ENCODE measurements at regions of chr7 and their contacts with region 1.

Region 1: DNA sequence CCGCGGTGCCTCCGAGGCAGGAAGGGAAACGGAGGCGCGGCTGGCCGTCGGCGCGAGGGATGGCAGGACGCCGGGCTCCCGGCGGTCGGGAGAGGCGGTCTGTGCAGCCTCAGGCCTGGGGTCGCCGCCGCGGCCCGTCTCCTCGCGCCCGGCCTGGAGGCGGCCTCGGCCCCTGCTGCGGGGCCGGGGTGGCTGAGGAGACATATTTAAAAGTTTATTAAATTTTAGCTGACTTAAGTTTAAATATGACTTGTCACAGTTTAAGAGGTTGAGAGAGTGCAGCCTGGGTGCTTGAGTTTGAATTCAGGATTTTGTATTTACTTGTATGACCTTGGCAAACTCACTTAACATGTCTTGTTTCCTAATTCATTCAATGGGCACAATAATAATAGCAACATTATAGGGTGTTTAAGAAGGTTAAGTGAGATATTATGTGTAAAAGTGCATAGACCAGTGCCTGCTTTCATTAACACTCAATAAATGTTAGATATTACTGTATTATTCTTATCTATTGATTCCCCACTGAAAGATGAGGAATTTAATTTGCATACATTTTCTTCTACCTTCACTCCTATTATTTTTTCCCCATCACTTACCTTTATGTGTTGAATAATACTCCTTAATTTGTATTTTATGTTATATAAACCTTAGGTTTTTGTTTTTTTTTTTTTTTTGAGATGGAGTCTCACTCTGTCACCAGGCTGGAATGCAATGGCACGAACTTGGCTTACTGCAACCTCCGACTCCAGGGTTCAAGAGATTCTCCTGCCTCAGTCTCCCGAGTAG is 718 bp downstream of the DYNC2I1 start:
- DNase-seq: peak in 2 of 10 donors; percentile 20 to 22
- ATAC-seq: no peak
- H3K4me3 Mint-ChIP-seq: peak overlapping the region; percentile 64 to 99 (median 96)
- H3K27ac Mint-ChIP-seq: peak overlapping the region; percentile 43 to 90 (median 68)
- H3K4me1 Mint-ChIP-seq: peaks cover 12 to 42% (median 28%) of the 10 kb centered on the region in 4 donors
- H3K27me3 Mint-ChIP-seq: no peaks in the 10 kb centered on the region

Region 2: GRCh38 chr7:158704704-158705468 is 152.2 kb before region 1 on chr7 and contains the start of gene NCAPG2:
- POLR2A ChIA-PET with region 1: interaction called, 11 read pairs
- DNase-seq: peak; percentile 90 to 99 (median 97)
- ATAC-seq: peak; percentile 96 to 97
- H3K4me3 Mint-ChIP-seq: peak within 1 kb of the TSS; percentile 78 to 98 (median 88)
- H3K27ac Mint-ChIP-seq: peak within 1 kb of the TSS; percentile 43 to 96 (median 82)
- H3K4me1 Mint-ChIP-seq: peaks cover 12 to 21% (median 17%) of the 10 kb centered on the region in 4 donors
- H3K27me3 Mint-ChIP-seq: no peaks in the 10 kb centered on the region
- polyA plus RNA-seq, gene NCAPG2: 2.4 to 3.7 (median 2.6) TPM

Region 3: DNA sequence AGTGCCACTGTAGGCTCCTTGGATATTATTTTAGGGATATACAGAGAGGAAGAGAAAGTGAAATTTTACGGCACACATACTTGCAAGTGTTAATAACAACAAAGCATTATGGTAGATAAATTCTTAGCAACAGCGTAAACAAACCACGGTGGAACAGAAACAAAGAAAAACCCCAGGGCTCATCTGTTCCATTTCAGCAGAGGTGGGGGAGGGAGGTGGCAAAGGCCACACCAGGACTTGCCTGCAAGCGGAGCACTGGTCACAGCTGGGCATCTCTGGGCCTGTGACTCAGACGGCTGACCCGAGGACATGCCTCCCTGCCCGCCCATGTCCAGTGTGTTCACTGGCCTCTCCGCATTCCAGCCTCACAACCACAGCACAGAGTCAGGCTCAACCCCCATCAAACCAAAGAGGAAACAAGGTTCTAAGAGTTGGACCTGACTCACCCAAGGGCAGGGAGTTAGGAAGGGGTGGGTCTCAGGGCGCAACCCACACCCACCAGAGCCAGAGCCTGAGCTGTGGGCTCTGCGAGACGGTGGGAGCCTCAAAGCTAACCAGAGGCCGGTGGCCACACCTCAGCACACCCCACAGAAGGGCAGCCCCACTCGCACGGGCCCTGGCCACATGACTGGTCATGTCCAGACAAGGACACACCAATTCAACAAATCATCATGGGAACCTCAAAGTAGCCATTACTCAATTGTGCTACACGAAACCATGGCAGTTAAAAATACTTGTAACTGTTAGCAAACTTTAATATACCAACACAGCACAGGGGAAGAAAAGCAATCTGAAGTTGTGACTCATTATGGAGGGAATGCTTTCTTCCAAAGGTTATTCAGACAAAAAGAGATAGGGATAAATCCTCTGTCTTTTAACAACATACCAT is 38.5 kb before region 1 on chr7:
- POLR2A ChIA-PET with region 1: interaction called, 10 read pairs
- DNase-seq: peak; percentile 54 to 88 (median 80)
- ATAC-seq: peak; percentile 65 to 66
- H3K4me3 Mint-ChIP-seq: peak overlapping the region; percentile 79 to 93 (median 88)
- H3K27ac Mint-ChIP-seq: peak overlapping the region; percentile 94 to 100 (median 98)
- H3K4me1 Mint-ChIP-seq: peaks cover 46 to 94% (median 88%) of the 10 kb centered on the region in 4 donors
- H3K27me3 Mint-ChIP-seq: no peaks in the 10 kb centered on the region

Region 4: GRCh38 chr7:158887594-158887993 is 30.5 kb after region 1 on chr7:
- POLR2A ChIA-PET with region 1: interaction called, 11 read pairs
- DNase-seq: no peak
- ATAC-seq: no peak
- H3K4me3 Mint-ChIP-seq: no peak overlapping the region
- H3K27ac Mint-ChIP-seq: no peak overlapping the region
- H3K4me1 Mint-ChIP-seq: no peaks in the 10 kb centered on the region
- H3K27me3 Mint-ChIP-seq: no peaks in the 10 kb centered on the region

Region 5: DNA sequence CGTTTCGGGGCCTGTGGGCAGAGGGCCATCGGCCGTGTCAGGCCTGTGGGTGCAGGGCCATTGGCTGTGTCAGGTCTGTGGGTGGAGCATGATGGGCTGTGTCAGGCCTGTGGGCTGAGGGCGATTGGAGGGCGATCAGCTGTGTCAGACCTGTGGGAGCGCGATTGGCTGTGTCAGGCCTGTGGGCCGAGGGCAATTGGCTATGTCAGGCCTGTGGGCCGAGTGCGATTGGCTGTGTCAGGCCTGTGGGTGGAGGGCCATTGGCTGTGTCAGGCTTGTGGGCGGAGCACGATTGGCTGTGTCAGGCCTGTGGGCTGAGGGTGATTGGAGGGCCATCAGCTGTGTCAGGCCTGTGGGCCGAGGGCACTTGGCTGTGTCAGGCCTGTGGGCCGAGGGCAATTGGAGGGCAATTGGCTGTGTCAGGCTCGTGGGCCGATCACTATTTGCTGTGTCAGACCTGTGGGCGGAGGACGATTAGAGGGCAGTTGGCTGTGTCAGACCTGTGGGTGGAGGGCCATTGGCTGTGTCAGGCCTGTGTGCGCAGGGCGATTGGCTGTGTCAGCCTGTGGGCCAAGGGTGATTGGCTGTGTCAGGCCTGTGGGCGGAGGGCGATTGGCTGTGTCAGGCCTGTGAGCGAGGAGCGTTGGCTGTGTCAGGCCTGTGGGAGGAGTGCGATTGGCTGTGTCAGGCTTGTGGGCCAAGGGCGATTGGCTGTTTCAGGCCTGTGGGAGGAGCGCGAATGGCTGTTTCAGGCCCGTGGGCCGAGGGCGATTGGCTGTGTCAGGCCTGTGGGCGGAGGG is 53.4 kb after region 1 on chr7:
- POLR2A ChIA-PET with region 1: no interaction called
- DNase-seq: no peak
- ATAC-seq: no peak
- H3K4me3 Mint-ChIP-seq: no peak overlapping the region
- H3K27ac Mint-ChIP-seq: peak overlapping the region in 4 of 10 donors; percentile 19 to 62 (median 50)
- H3K4me1 Mint-ChIP-seq: peaks cover 0 to 8% (median 3%) of the 10 kb centered on the region in 4 donors
- H3K27me3 Mint-ChIP-seq: no peaks in the 10 kb centered on the region